Natural killer cell (primary cell): ENCODE measurements at regions of chr9 and their contacts with region 1.

Region 1: DNA sequence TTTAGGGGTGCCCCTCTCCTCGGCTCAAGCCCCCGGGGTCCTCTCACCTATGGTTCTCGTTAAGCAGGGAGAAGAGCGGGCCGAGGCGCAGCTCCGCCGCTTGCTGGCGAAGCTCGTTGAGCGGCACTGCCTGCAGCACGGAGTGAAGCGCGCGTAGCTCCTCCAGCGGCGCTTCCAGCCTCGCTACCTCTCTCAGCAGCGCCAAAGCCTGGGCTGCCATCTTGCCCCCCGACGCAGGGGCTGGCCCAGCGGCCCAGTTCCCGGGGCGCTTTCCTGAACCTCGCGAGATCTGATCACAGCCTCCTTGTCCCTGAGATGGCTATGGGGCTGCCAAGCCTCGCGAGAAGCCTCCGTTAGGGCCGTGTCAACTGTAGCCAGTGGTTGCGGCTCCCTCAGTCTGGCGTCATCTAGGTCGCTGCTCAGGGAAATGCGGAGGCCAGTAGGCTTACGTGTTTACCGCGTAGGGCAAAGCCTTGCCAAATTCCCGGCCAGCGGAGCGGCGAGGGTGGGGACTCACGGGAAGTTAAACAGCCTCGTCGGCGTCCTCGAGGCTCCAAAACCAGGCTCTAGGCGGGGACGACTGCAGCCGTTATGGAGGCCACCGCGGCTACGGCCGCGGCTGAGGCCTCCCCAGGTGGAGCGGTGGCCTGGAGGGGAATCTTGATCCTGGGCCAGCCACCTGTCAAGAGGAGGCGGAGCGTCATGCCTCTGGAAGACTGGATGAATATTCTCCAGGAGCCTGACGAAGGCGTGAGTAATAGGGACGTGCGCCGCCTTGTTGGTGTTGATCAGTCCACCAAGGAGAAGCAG is at the start of gene PSMD5:
- DNase-seq: peak; percentile 92 to 98
- ATAC-seq: peak; percentile 95 to 99 (median 97)
- H3K4me3 ChIP-seq: peak within 1 kb of the TSS; percentile 85
- H3K4me3 Mint-ChIP-seq: peak within 1 kb of the TSS; percentile 99
- H3K27ac ChIP-seq: peak within 1 kb of the TSS; percentile 92
- H3K27ac Mint-ChIP-seq: peak within 1 kb of the TSS; percentile 98 to 99
- H3K4me1 ChIP-seq: peaks cover 28% of the 10 kb centered on the region
- H3K4me1 Mint-ChIP-seq: peaks cover 57 to 58% of the 10 kb centered on the region in 2 donors
- H3K27me3 ChIP-seq: no peaks in the 10 kb centered on the region
- H3K27me3 Mint-ChIP-seq: no peaks in the 10 kb centered on the region
- CTCF ChIP-seq: no peak
- total RNA-seq, gene PSMD5: 24.6 to 41.2 (median 37.1) TPM

Region 2: GRCh38 chr9:120792898-120793765 is 49.8 kb before region 1 on chr9 and contains the start of gene FBXW2:
- intact Hi-C with region 1: loop called (anchors 2 kb)
- DNase-seq: peak; percentile 75 to 92
- ATAC-seq: peak; percentile 85 to 92 (median 87)
- H3K4me3 ChIP-seq: peak within 1 kb of the TSS; percentile 76
- H3K4me3 Mint-ChIP-seq: peak within 1 kb of the TSS; percentile 94
- H3K27ac ChIP-seq: peak within 1 kb of the TSS; percentile 78
- H3K27ac Mint-ChIP-seq: peak within 1 kb of the TSS; percentile 87 to 96
- H3K4me1 ChIP-seq: peaks cover 15% of the 10 kb centered on the region
- H3K4me1 Mint-ChIP-seq: peaks cover 51 to 52% of the 10 kb centered on the region in 2 donors
- H3K27me3 ChIP-seq: no peaks in the 10 kb centered on the region
- H3K27me3 Mint-ChIP-seq: no peaks in the 10 kb centered on the region
- CTCF ChIP-seq: no peak
- total RNA-seq, gene FBXW2: 88.3 to 122 (median 92.6) TPM

Region 3: GRCh38 chr9:120868676-120869359 is 25.9 kb after region 1 on chr9:
- intact Hi-C with region 1: loop called (anchors 1 kb)
- DNase-seq: peak; percentile 93 to 96
- ATAC-seq: peak; percentile 81 to 93 (median 83)
- H3K4me3 ChIP-seq: peak overlapping the region; percentile 68
- H3K4me3 Mint-ChIP-seq: peak overlapping the region; percentile 94
- H3K27ac ChIP-seq: peak overlapping the region; percentile 78
- H3K27ac Mint-ChIP-seq: peak overlapping the region; percentile 92 to 94
- H3K4me1 ChIP-seq: peaks cover 16% of the 10 kb centered on the region
- H3K4me1 Mint-ChIP-seq: peaks cover 4 to 22% of the 10 kb centered on the region in 2 donors
- H3K27me3 ChIP-seq: no peaks in the 10 kb centered on the region
- H3K27me3 Mint-ChIP-seq: no peaks in the 10 kb centered on the region
- CTCF ChIP-seq: peak; percentile 57

Region 4: GRCh38 chr9:121393318-121393717 is 550.4 kb after region 1 on chr9:
- intact Hi-C with region 1: no loop called
- DNase-seq: no peak
- ATAC-seq: no peak
- H3K4me3 ChIP-seq: no peak overlapping the region
- H3K4me3 Mint-ChIP-seq: peak overlapping the region; percentile 11
- H3K27ac ChIP-seq: no peak overlapping the region
- H3K27ac Mint-ChIP-seq: peak overlapping the region in 1 of 2 donors; percentile 42
- H3K4me1 ChIP-seq: no peaks in the 10 kb centered on the region
- H3K4me1 Mint-ChIP-seq: peaks cover 16 to 17% of the 10 kb centered on the region in 2 donors
- H3K27me3 ChIP-seq: no peaks in the 10 kb centered on the region
- H3K27me3 Mint-ChIP-seq: no peaks in the 10 kb centered on the region
- CTCF ChIP-seq: no peak